ENCODE measurements at regions of chr14 and their contacts with region 1.

Region 1: GRCh38 chr14:39243822-39244221 is 10.1 kb downstream of the MIA2 start:
- DNase-seq: no peak
- CTCF ChIP-seq: no peak

Region 2: GRCh38 chr14:39232554-39233415 is 11.0 kb before region 1 on chr14:
- CTCF ChIA-PET with region 1: interaction called, 13 read pairs
- POLR2A ChIA-PET with region 1: no interaction called
- DNase-seq: peak; percentile 23
- CTCF ChIP-seq: no peak

Measured in GM10248 (cell line).